MCF 10A (cell line): ENCODE measurements at regions of chrX and their contacts with region 1.

Region 1: DNA sequence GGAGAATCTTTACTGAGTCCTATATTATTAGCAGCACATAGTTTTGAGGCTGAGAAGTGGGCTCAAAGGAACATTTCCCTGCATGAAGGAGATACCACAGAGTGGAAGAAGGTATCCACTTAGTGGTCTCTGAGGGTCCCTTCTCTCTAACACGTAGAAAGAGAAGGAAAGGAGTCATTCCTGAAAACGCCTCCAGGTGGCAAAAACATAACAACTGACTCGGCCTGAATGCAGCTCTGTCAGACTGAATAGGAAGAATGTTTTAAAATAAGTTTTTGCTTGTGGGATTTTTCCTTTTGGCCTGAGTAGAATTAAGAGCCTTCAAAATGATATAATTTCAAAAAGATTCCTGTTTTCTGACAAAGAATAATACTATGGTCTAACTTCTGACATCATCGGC is 23.3 kb downstream of the RPGR start:
- DNase-seq: peak; percentile 47
- H3K4me3 Mint-ChIP-seq: no peak overlapping the region
- H3K27ac Mint-ChIP-seq: peak overlapping the region; percentile 39
- H3K4me1 Mint-ChIP-seq: peaks cover 6% of the 10 kb centered on the region
- H3K27me3 Mint-ChIP-seq: peaks cover 46% of the 10 kb centered on the region
- CTCF ChIP-seq: peak; percentile 30

Region 2: GRCh38 chrX:38293741-38294140 is 10.3 kb before region 1 on chrX:
- CTCF ChIA-PET with region 1: interaction called, 20 read pairs
- POLR2A ChIA-PET with region 1: no interaction called
- intact Hi-C with region 1: no loop called
- DNase-seq: no peak
- H3K4me3 Mint-ChIP-seq: no peak overlapping the region
- H3K27ac Mint-ChIP-seq: no peak overlapping the region
- H3K4me1 Mint-ChIP-seq: no peaks in the 10 kb centered on the region
- H3K27me3 Mint-ChIP-seq: peaks cover 7% of the 10 kb centered on the region
- CTCF ChIP-seq: no peak